Esophagus muscularis mucosa (tissue), 4 donors: ENCODE measurements at regions of chr6 and their contacts with region 1.

Region 1: GRCh38 chr6:89970609-89971337 is 76.5 kb downstream of the GJA10 start:
- DNase-seq: no peak
- H3K4me3 ChIP-seq: no peak overlapping the region
- H3K27ac ChIP-seq: no peak overlapping the region
- H3K4me1 ChIP-seq: peaks cover 0 to 8% (median 7%) of the 10 kb centered on the region in 4 donors
- H3K27me3 ChIP-seq: no peaks in the 10 kb centered on the region
- CTCF ChIP-seq: peak; percentile 64 to 73 (median 67)
- EP300 ChIP-seq: no peak
- POLR2A ChIP-seq: no peak

Region 2: DNA sequence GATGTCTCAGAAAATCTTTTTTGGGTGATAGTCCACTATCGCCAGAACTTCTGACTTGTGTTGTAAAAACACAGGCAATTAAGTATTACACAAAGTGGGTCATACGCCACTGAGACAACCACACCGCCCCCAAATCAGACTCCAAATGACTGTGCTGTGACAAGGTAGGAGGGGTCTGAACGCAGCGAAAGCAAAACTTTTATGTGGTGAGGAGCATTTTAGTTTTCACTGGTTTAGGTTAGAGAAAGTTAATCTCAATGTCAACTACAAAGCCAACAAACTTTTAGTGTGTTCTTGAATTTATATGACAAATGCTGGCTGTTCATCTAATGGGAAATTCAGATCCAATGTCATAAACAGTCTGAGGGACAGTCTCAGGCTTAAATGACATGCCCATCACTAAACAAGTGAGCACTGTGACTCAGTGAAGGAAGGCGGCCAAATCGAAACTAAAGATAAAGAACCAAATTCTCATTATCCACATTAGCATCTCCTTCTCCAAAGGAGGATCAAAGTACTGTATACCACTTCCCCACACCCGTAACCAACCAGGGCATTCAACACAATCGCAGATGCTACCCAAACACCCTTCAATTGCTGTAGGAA is 110.2 kb after region 1 on chr6:
- intact Hi-C with region 1: loop called (anchors 10 kb)
- DNase-seq: no peak
- H3K4me3 ChIP-seq: no peak overlapping the region
- H3K27ac ChIP-seq: no peak overlapping the region
- H3K4me1 ChIP-seq: no peaks in the 10 kb centered on the region
- H3K27me3 ChIP-seq: no peaks in the 10 kb centered on the region
- CTCF ChIP-seq: no peak
- EP300 ChIP-seq: no peak
- POLR2A ChIP-seq: no peak

Region 3: DNA sequence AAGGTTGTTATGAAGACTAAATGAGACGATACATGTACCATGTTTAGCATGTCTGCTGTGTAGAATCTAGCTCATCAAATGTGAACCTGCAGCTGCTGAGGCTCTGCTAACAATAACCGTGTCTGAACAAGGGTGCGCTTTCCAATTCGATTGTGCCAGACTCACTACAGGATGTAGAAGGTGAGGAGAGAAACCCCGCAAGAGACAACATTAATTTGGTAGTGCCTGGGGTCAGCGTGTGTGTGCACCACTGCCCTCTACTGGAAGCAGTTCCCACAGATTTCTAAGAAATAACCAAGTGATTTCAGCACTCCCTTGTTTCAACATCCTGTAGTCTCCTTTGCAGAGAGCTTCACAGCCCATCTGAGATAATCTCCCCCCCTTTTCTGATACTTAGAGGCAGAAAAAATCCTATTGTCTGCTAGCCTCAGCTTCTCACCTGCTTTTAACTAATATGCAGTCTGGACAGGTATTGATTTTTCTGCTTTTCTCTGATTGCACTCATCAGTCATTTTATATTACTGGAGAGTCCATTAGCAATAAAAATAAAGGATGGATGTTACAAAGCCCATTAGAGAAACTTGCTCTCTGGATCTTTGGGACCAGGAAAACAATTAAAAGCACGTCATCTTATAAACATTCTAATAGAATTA is 422.6 kb after region 1 on chr6:
- intact Hi-C with region 1: loop called (anchors 2 kb)
- DNase-seq: no peak
- H3K4me3 ChIP-seq: no peak overlapping the region
- H3K27ac ChIP-seq: no peak overlapping the region
- H3K4me1 ChIP-seq: peaks cover 0 to 6% (median 2%) of the 10 kb centered on the region in 4 donors
- H3K27me3 ChIP-seq: no peaks in the 10 kb centered on the region
- CTCF ChIP-seq: peak; percentile 75 to 84 (median 80)
- EP300 ChIP-seq: no peak
- POLR2A ChIP-seq: no peak

Region 4: DNA sequence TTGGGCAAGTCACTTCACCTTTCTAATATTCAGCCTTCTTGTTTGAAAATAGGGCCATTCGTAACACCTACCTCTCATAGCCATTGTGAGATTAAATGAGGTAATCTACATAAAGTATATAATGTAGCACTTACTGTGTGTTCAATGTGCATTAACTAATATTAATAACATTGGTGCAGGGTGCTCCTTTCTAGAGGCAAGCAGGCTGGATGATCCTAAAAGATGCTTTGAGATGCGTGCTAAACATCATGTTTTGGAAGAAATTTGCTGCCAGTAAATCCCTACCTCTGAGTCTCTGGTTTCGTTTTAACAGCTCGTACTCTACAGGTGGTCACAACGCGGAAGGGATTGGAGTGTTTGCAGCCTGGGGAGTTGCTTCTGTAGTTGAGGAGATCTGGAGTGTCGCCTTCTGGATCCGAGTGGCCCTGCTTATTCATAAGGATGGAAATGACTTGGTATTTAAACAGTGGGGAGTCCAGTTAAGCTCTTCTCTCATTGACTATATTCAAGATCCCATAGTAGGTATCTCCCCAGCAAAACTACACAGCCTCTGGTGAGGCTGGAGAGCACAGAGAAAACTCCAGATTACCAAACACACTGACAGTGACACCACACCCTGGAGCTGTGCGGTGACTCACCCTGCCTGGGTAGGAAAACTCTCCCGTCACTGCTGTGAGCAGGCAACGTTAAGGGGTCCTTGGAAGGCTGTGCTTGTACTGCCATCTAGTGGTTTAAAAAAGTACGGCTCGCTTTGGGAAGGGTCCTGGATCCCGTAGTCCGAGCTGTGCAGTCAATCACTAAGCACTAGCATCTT is 508.2 kb after region 1 on chr6:
- intact Hi-C with region 1: loop called (anchors 2 kb)
- DNase-seq: peak; percentile 96
- H3K4me3 ChIP-seq: no peak overlapping the region
- H3K27ac ChIP-seq: peak overlapping the region in 1 of 4 donors; percentile 10
- H3K4me1 ChIP-seq: peaks cover 5 to 10% (median 8%) of the 10 kb centered on the region in 4 donors
- H3K27me3 ChIP-seq: no peaks in the 10 kb centered on the region
- CTCF ChIP-seq: peak; percentile 88 to 93 (median 93)
- EP300 ChIP-seq: no peak
- POLR2A ChIP-seq: no peak